Esophagus muscularis mucosa (tissue), 4 donors: ENCODE measurements at regions of chr9 and their contacts with region 1.

Region 1: GRCh38 chr9:17462869-17463464 is 115.9 kb upstream of the SH3GL2 start:
- DNase-seq: no peak
- H3K4me3 ChIP-seq: no peak overlapping the region
- H3K27ac ChIP-seq: no peak overlapping the region
- H3K4me1 ChIP-seq: no peaks in the 10 kb centered on the region
- H3K27me3 ChIP-seq: no peaks in the 10 kb centered on the region
- CTCF ChIP-seq: peak; percentile 70 to 80 (median 73)
- EP300 ChIP-seq: no peak
- POLR2A ChIP-seq: no peak

Region 2: DNA sequence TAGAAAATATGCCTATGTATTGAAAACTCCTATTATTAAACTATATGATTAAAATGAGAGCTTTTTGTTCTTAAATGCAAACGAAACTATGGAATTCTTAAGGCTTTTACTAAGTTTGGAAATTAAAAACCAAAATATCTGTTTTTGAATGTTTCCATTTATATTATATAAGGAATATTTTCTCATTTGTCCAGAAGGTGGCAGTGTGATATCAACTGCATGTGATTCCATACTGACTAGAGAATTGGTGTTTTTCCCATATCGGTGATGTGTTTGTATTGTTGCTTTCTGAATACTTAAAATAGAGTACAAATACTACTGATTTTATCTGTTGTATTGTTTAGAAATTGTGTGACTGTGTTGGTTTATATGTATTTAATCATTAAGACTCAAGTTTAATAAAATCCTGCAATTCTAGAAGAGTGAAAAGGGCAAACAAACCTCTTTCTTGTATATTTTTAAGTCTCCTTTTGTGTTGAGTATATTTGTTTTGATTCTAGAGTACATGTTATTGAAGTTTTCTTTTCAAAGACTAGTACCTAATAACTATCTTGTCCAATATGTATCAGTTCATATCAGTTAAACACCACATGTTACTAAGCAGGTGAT is 1589.3 kb before region 1 on chr9:
- intact Hi-C with region 1: loop called (anchors 10 kb)
- DNase-seq: no peak
- H3K4me3 ChIP-seq: no peak overlapping the region
- H3K27ac ChIP-seq: no peak overlapping the region
- H3K4me1 ChIP-seq: no peaks in the 10 kb centered on the region
- H3K27me3 ChIP-seq: no peaks in the 10 kb centered on the region
- CTCF ChIP-seq: peak; percentile 60 to 70 (median 68)
- EP300 ChIP-seq: no peak
- POLR2A ChIP-seq: no peak

Region 3: DNA sequence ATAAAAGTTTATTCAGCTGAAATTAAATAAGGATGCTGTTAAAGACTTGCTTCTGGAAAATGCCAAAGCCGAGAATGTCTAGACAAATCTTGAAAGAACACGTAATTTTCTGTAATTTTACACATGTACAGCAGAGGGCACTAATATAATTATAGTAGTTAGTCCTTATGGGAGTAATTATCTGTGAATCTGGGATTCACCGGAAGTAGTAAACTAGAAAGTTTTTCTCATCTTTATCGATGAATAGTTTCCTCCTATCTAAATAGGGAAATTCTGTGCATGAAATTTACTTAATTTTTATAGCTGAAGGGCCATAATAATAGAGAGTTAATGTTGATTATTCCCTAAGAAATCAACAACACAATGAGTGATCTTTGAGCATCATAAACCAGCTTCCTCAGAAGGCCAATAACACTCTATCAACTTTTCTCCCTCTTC is 346.5 kb before region 1 on chr9:
- intact Hi-C with region 1: loop called (anchors 2 kb)
- DNase-seq: no peak
- H3K4me3 ChIP-seq: no peak overlapping the region
- H3K27ac ChIP-seq: peak overlapping the region in 1 of 4 donors; percentile 32
- H3K4me1 ChIP-seq: peaks cover 0 to 18% (median 16%) of the 10 kb centered on the region in 4 donors
- H3K27me3 ChIP-seq: no peaks in the 10 kb centered on the region
- CTCF ChIP-seq: peak; percentile 54 to 62 (median 61)
- EP300 ChIP-seq: no peak
- POLR2A ChIP-seq: no peak

Region 4: GRCh38 chr9:17272536-17272935 is 190.4 kb before region 1 on chr9:
- intact Hi-C with region 1: no loop called
- DNase-seq: no peak
- H3K4me3 ChIP-seq: no peak overlapping the region
- H3K27ac ChIP-seq: no peak overlapping the region
- H3K4me1 ChIP-seq: peaks cover 0 to 8% (median 0%) of the 10 kb centered on the region in 4 donors
- H3K27me3 ChIP-seq: no peaks in the 10 kb centered on the region
- CTCF ChIP-seq: no peak
- EP300 ChIP-seq: no peak
- POLR2A ChIP-seq: no peak

Region 5: DNA sequence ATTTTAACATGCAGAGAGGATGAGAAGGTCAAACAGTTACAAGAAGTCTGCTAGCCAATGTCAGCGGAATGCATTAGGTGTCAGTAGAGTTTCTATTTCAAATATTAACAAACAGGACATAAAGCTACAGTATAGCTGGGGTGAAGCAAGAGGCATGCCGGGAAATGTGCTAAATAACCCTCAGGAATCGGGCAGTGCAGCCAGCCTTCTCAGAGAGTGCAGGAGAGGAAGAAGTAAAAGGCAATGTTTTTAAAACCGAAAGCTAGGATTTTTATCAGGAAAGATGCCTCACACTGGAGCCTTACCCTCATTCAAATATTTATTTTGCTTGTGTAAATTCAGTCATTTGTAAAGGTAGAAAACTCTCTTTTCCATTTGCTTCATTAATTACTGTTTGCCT is 56.8 kb after region 1 on chr9:
- intact Hi-C with region 1: no loop called
- DNase-seq: peak; percentile 82
- H3K4me3 ChIP-seq: no peak overlapping the region
- H3K27ac ChIP-seq: no peak overlapping the region
- H3K4me1 ChIP-seq: peaks cover 0 to 16% (median 14%) of the 10 kb centered on the region in 4 donors
- H3K27me3 ChIP-seq: no peaks in the 10 kb centered on the region
- CTCF ChIP-seq: no peak
- EP300 ChIP-seq: no peak
- POLR2A ChIP-seq: no peak

Region 6: GRCh38 chr9:17878810-17879370 is 415.9 kb after region 1 on chr9:
- intact Hi-C with region 1: no loop called
- DNase-seq: no peak
- H3K4me3 ChIP-seq: no peak overlapping the region
- H3K27ac ChIP-seq: no peak overlapping the region
- H3K4me1 ChIP-seq: no peaks in the 10 kb centered on the region
- H3K27me3 ChIP-seq: no peaks in the 10 kb centered on the region
- CTCF ChIP-seq: no peak
- EP300 ChIP-seq: no peak
- POLR2A ChIP-seq: no peak